B cell (primary cell): ENCODE measurements at regions of chr11 and their contacts with region 1.

Region 1: GRCh38 chr11:66386171-66387069 is 14.9 kb upstream of the SLC29A2 start:
- DNase-seq: peak; percentile 88
- ATAC-seq: peak; percentile 85
- H3K4me3 ChIP-seq: peak overlapping the region in 2 of 5 experiments; percentile 11 to 34
- H3K4me3 Mint-ChIP-seq: peak overlapping the region; percentile 21
- H3K27ac ChIP-seq: no peak overlapping the region
- H3K27ac Mint-ChIP-seq: no peak overlapping the region
- H3K4me1 ChIP-seq: peaks cover 7 to 12% of the 10 kb centered on the region in 2 donors
- H3K4me1 Mint-ChIP-seq: peaks cover 10% of the 10 kb centered on the region
- H3K27me3 ChIP-seq: no peaks in the 10 kb centered on the region
- H3K27me3 Mint-ChIP-seq: no peaks in the 10 kb centered on the region
- CTCF ChIP-seq: peak; percentile 94

Region 2: GRCh38 chr11:65700391-65700790 is 686.0 kb before region 1 on chr11:
- CTCF ChIA-PET with region 1: no interaction called
- POLR2A ChIA-PET with region 1: no interaction called
- intact Hi-C with region 1: no loop called
- DNase-seq: peak; percentile 48
- ATAC-seq: peak; percentile 76
- H3K4me3 ChIP-seq: no peak overlapping the region
- H3K4me3 Mint-ChIP-seq: no peak overlapping the region
- H3K27ac ChIP-seq: no peak overlapping the region
- H3K27ac Mint-ChIP-seq: no peak overlapping the region
- H3K4me1 ChIP-seq: peaks cover 5 to 7% of the 10 kb centered on the region in 2 donors
- H3K4me1 Mint-ChIP-seq: peaks cover 9% of the 10 kb centered on the region
- H3K27me3 ChIP-seq: no peaks in the 10 kb centered on the region
- H3K27me3 Mint-ChIP-seq: peaks cover 3% of the 10 kb centered on the region
- CTCF ChIP-seq: no peak

Region 3: DNA sequence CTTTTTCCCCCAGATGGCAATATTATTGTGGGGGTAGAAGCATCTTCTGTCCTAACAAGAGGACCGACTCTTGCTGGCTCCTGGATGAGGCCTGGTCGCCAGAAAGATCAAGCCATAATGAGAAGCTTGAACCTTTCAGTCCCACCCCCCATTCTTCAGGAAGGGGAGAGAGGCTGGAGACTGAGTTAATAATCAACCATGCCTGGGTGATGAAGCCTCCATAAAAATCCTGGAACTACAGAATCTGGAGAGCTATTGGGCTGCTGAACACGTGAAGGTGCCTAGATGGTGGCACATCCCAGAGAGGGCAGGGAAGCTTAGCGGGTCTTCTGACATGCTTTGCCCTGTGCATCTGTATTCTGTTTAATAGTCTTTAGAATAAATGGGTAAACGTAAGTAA is 622.0 kb before region 1 on chr11:
- CTCF ChIA-PET with region 1: no interaction called
- POLR2A ChIA-PET with region 1: no interaction called
- intact Hi-C with region 1: no loop called
- DNase-seq: no peak
- ATAC-seq: no peak
- H3K4me3 ChIP-seq: no peak overlapping the region
- H3K4me3 Mint-ChIP-seq: no peak overlapping the region
- H3K27ac ChIP-seq: no peak overlapping the region
- H3K27ac Mint-ChIP-seq: no peak overlapping the region
- H3K4me1 ChIP-seq: peaks cover 0 to under 1% of the 10 kb centered on the region in 2 donors
- H3K4me1 Mint-ChIP-seq: no peaks in the 10 kb centered on the region
- H3K27me3 ChIP-seq: no peaks in the 10 kb centered on the region
- H3K27me3 Mint-ChIP-seq: peaks cover 5% of the 10 kb centered on the region
- CTCF ChIP-seq: no peak

Region 4: DNA sequence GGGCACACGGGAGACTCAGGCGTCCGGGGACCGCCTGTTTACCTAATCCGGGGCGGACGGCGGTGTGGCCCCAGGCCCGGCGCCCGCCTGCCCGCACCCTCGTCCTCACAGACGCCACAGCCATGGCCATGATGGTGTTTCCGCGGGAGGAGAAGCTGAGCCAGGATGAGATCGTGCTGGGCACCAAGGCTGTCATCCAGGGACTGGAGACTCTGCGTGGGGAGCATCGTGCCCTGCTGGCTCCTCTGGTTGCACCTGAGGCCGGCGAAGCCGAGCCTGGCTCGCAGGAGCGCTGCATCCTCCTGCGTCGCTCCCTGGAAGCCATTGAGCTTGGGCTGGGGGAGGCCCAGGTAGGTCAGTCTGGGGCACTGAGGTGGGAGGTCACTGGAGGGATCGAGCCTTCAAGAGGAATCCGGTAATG is 127.9 kb before region 1 on chr11:
- CTCF ChIA-PET with region 1: no interaction called
- POLR2A ChIA-PET with region 1: no interaction called
- intact Hi-C with region 1: no loop called
- DNase-seq: no peak
- ATAC-seq: no peak
- H3K4me3 ChIP-seq: peak overlapping the region in 4 of 5 experiments; percentile 87 to 99 (median 96)
- H3K4me3 Mint-ChIP-seq: peak overlapping the region; percentile 98
- H3K27ac ChIP-seq: peak overlapping the region; percentile 85
- H3K27ac Mint-ChIP-seq: peak overlapping the region; percentile 98
- H3K4me1 ChIP-seq: peaks cover 13 to 18% of the 10 kb centered on the region in 2 donors
- H3K4me1 Mint-ChIP-seq: peaks cover 25% of the 10 kb centered on the region
- H3K27me3 ChIP-seq: no peaks in the 10 kb centered on the region
- H3K27me3 Mint-ChIP-seq: no peaks in the 10 kb centered on the region
- CTCF ChIP-seq: peak; percentile 40

Region 5: DNA sequence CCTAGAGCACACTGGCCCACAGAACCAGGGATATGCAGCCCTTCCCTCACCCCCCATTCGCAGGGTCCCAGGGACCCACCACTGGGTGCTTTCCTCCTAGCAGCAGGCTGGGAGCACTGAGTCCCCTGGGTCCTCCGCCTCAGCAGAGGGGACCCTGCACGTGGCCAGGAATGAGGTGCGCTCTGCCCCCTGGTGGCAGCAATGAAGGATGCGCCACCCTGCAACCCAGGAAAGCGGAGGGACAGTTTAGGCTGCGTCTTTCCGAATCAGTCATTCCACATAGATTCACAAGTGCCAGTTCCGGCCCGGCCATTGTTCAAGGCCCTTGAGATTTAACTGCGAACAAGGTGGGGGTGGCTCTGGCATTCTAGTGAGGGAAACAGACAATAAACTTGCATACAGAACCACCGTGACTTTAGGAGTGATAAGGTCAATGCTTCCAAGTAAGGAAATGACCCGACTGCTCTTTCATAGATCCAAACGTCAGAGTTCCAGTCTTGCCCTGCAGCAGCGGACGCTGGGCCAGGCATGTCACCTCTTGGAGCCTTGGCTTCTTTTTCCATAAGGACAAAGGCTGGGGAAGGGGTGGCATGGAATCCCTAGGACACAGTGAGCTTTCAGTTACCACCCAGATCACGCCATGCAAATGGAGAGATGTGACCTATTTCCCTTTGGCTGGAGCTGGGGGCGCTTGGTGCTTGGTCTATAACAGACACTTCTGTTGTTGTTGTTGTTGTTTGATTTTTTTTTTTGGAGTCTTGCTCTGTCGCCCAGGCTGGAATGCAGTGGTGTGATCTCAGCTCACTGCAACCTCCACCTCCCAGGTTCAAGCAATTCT is 57.9 kb before region 1 on chr11:
- CTCF ChIA-PET with region 1: interaction called, 6 read pairs
- POLR2A ChIA-PET with region 1: no interaction called
- intact Hi-C with region 1: loop called (anchors 1 kb)
- DNase-seq: peak; percentile 89
- ATAC-seq: peak; percentile 98
- H3K4me3 ChIP-seq: peak overlapping the region in 1 of 5 experiments; percentile 30
- H3K4me3 Mint-ChIP-seq: peak overlapping the region; percentile 52
- H3K27ac ChIP-seq: no peak overlapping the region
- H3K27ac Mint-ChIP-seq: peak overlapping the region; percentile 47
- H3K4me1 ChIP-seq: peaks cover 15 to 25% of the 10 kb centered on the region in 2 donors
- H3K4me1 Mint-ChIP-seq: peaks cover 16% of the 10 kb centered on the region
- H3K27me3 ChIP-seq: no peaks in the 10 kb centered on the region
- H3K27me3 Mint-ChIP-seq: no peaks in the 10 kb centered on the region
- CTCF ChIP-seq: peak; percentile 93

Region 6: DNA sequence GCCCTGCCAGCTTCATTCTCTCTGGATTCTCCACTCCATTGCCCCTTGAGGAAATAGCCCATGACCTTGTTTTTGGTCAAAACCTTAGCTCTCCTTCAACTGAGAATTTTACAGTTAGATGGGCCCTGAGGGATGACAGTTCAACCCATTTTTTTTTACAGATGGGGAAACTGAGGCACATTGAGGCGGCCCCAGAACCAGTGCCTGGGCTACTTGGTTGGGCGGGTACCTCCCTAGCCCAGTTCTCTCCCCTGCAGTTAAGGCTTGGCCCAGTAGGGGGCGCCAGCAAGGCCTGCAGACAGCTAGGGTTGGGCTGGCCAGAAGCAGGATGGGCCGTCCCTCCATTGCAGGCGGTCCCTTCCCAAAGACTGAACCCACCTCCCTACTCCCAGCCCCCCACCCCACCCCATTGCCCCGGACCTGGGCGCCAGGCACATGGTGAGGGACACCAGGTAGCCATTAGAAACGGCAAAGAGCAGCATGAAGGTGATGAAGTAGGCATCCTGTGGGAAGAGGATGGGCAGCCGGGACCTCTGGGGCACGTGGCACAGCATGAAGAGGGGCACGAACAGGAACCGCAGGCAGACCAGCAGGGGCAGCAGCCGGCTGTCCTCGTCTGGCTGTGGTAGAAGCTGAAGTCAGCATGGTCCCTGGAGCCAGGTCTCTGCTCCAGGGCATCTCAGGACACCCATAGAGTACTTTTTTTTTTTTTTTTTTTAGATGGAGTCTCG is 22.4 kb before region 1 on chr11:
- CTCF ChIA-PET with region 1: interaction called, 25 read pairs
- POLR2A ChIA-PET with region 1: no interaction called
- intact Hi-C with region 1: no loop called
- DNase-seq: peak; percentile 53
- ATAC-seq: peak; percentile 56
- H3K4me3 ChIP-seq: no peak overlapping the region
- H3K4me3 Mint-ChIP-seq: no peak overlapping the region
- H3K27ac ChIP-seq: no peak overlapping the region
- H3K27ac Mint-ChIP-seq: no peak overlapping the region
- H3K4me1 ChIP-seq: no peaks in the 10 kb centered on the region
- H3K4me1 Mint-ChIP-seq: no peaks in the 10 kb centered on the region
- H3K27me3 ChIP-seq: no peaks in the 10 kb centered on the region
- H3K27me3 Mint-ChIP-seq: no peaks in the 10 kb centered on the region
- CTCF ChIP-seq: peak; percentile 70

Region 7: DNA sequence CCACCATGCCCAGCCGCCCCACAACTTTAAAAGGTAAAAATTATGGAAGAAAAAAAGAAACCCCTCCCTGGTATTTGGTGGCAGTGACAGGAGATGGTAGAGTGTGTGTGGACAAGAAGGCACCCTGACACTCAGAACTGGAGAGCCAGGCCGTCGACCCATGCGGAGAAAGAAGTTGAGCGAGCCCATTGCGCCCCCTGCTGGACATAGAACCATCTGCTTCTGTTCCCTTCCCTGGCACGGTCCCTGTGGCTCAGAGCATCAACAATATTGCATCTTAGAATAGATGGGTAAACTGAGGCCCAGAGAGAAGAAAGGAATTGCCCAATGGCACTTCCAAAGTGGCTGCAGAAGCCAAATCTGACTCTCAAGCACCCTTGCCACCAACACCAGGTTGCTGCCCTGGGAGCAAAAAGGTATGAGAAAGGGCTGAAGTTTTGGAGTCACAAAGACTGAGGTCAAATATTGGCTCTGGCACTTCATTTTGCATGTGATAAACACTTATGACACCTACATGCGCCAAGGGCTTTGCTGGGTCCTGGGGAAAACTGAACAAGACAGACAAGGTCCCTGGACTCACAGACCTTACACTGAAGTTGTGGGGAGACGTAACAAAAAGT is 43.7 kb after region 1 on chr11:
- CTCF ChIA-PET with region 1: interaction called, 10 read pairs
- POLR2A ChIA-PET with region 1: no interaction called
- intact Hi-C with region 1: loop called (anchors 1 kb)
- DNase-seq: peak; percentile 71
- ATAC-seq: peak; percentile 65
- H3K4me3 ChIP-seq: no peak overlapping the region
- H3K4me3 Mint-ChIP-seq: no peak overlapping the region
- H3K27ac ChIP-seq: no peak overlapping the region
- H3K27ac Mint-ChIP-seq: no peak overlapping the region
- H3K4me1 ChIP-seq: no peaks in the 10 kb centered on the region
- H3K4me1 Mint-ChIP-seq: peaks cover 2% of the 10 kb centered on the region
- H3K27me3 ChIP-seq: peaks cover 0 to 10% (median 0%) of the 10 kb centered on the region in 4 experiments
- H3K27me3 Mint-ChIP-seq: peaks cover 4% of the 10 kb centered on the region
- CTCF ChIP-seq: peak; percentile 77

Region 8: GRCh38 chr11:66480117-66480938 is 93.9 kb after region 1 on chr11 and contains the start of gene DPP3:
- CTCF ChIA-PET with region 1: interaction called, 12 read pairs
- POLR2A ChIA-PET with region 1: no interaction called
- intact Hi-C with region 1: no loop called
- DNase-seq: peak; percentile 96
- ATAC-seq: peak; percentile 97
- H3K4me3 ChIP-seq: peak within 1 kb of the TSS; percentile 36 to 92 (median 71)
- H3K4me3 Mint-ChIP-seq: peak within 1 kb of the TSS; percentile 92
- H3K27ac ChIP-seq: peak within 1 kb of the TSS; percentile 63 to 85
- H3K27ac Mint-ChIP-seq: peak within 1 kb of the TSS; percentile 93
- H3K4me1 ChIP-seq: peaks cover 10 to 20% of the 10 kb centered on the region in 2 donors
- H3K4me1 Mint-ChIP-seq: peaks cover 20% of the 10 kb centered on the region
- H3K27me3 ChIP-seq: no peaks in the 10 kb centered on the region
- H3K27me3 Mint-ChIP-seq: no peaks in the 10 kb centered on the region
- CTCF ChIP-seq: no peak
- total RNA-seq, gene DPP3: 21.5 and 22.7 TPM in 2 replicates